Head of caudate nucleus (tissue), 42 donors: ENCODE measurements at regions of chr6 and their contacts with region 1.

Region 1: GRCh38 chr6:105087571-105088211 is 92.1 kb downstream of the POPDC3 start:
- DNase-seq: peak in 28 of 42 donors; percentile 20 to 82 (median 52)

Region 2: GRCh38 chr6:104509355-104509754 is 578.3 kb before region 1 on chr6:
- intact Hi-C with region 1: no loop called
- DNase-seq: no peak

Region 3: GRCh38 chr6:104613416-104614001 is 474.2 kb before region 1 on chr6:
- intact Hi-C with region 1: no loop called
- DNase-seq: no peak

Region 4: DNA sequence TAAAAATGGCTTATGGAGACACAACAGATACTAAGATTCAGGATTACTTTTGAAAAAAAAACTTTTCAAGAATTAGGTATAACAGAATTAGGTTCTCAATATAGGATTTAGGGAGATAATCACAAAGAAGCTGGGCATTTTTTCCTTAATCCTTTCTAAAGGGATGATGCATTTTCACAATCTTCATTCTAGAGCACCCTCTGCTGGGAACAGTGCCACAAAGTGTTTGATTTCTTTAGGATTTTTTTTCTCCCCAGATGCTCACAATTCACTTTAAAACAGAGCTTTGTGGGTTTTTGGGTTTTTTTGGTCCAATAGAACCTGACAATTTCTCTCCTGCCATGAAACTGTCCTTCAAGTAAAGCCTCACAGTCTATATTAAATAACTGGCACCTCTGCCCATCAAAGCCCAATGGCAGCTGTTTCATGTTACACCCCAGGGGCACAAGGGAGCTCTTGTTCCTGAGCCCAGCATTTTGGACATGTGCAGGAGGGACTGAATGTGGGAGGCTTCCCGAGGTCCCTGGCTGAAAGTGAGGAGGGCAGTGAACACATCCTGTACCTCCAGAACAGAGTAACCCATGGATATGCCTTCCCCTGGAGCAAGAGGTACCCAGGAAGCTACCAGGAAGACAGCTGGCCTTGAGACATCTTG is 275.5 kb after region 1 on chr6:
- intact Hi-C with region 1: loop called (anchors 5 kb)
- DNase-seq: peak in 12 of 42 donors; percentile 10 to 55 (median 38)